ENCODE measurements at regions of chr10 and their contacts with region 1.

Region 1: GRCh38 chr10:95601116-95601719 is 40.0 kb upstream of the SORBS1 start:
- DNase-seq: peak; percentile 86
- H3K4me3 ChIP-seq: no peak overlapping the region
- H3K27ac ChIP-seq: no peak overlapping the region
- H3K4me1 ChIP-seq: no peaks in the 10 kb centered on the region
- H3K27me3 ChIP-seq: peaks cover 10% of the 10 kb centered on the region
- CTCF ChIP-seq: peak; percentile 90

Region 2: GRCh38 chr10:95133016-95133752 is 468.0 kb before region 1 on chr10:
- CTCF ChIA-PET with region 1: no interaction called
- POLR2A ChIA-PET with region 1: no interaction called
- intact Hi-C with region 1: loop called (anchors 10 kb)
- DNase-seq: peak; percentile 84
- H3K4me3 ChIP-seq: no peak overlapping the region
- H3K27ac ChIP-seq: no peak overlapping the region
- H3K4me1 ChIP-seq: no peaks in the 10 kb centered on the region
- H3K27me3 ChIP-seq: no peaks in the 10 kb centered on the region
- CTCF ChIP-seq: peak; percentile 77

Region 3: DNA sequence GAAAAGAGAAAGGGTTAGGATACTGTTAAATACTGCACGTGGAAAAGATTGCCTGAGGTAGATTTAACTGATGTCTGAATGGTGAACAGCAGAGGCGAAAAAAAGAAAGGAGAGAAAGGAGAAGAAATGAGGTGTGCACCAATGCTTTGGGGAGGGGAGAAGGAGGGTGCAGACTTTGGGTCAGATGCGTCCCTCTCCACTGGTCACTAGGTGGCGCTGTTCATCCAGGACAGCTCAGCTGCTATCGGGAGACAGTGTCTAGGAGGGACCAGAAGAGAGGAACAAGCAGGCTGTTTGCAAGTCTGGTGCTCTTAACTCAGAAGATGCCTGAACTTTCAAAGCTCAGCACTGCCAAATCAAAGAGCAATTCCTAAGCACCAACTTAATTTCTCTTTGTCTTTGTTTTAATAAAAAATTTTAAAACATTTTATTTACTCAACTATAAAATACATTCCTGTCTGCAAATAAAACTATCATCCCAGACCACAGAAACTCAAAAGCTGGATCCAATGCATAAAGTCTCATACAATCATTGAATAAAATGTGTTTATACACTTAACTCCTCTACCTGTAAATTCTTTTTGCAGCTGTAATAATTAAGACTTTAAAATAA is 226.5 kb before region 1 on chr10:
- CTCF ChIA-PET with region 1: interaction called, 5 read pairs
- POLR2A ChIA-PET with region 1: no interaction called
- intact Hi-C with region 1: loop called (anchors 1 kb)
- DNase-seq: peak; percentile 82
- H3K4me3 ChIP-seq: no peak overlapping the region
- H3K27ac ChIP-seq: no peak overlapping the region
- H3K4me1 ChIP-seq: no peaks in the 10 kb centered on the region
- H3K27me3 ChIP-seq: peaks cover 38% of the 10 kb centered on the region
- CTCF ChIP-seq: peak; percentile 84

Region 4: GRCh38 chr10:95430231-95430951 is 170.8 kb before region 1 on chr10:
- CTCF ChIA-PET with region 1: interaction called, 3 read pairs
- POLR2A ChIA-PET with region 1: no interaction called
- intact Hi-C with region 1: loop called (anchors 1 kb)
- DNase-seq: peak; percentile 55
- H3K4me3 ChIP-seq: no peak overlapping the region
- H3K27ac ChIP-seq: no peak overlapping the region
- H3K4me1 ChIP-seq: no peaks in the 10 kb centered on the region
- H3K27me3 ChIP-seq: peaks cover 8% of the 10 kb centered on the region
- CTCF ChIP-seq: peak; percentile 93

Region 5: GRCh38 chr10:95445837-95446486 is 155.3 kb before region 1 on chr10:
- CTCF ChIA-PET with region 1: no interaction called
- POLR2A ChIA-PET with region 1: no interaction called
- intact Hi-C with region 1: loop called (anchors 5 kb)
- DNase-seq: peak; percentile 76
- H3K4me3 ChIP-seq: no peak overlapping the region
- H3K27ac ChIP-seq: no peak overlapping the region
- H3K4me1 ChIP-seq: no peaks in the 10 kb centered on the region
- H3K27me3 ChIP-seq: peaks cover 12% of the 10 kb centered on the region
- CTCF ChIP-seq: peak; percentile 84

Measured in A673 (cell line).